ENCODE measurements at regions of chr3 and their contacts with region 1.

Region 1: DNA sequence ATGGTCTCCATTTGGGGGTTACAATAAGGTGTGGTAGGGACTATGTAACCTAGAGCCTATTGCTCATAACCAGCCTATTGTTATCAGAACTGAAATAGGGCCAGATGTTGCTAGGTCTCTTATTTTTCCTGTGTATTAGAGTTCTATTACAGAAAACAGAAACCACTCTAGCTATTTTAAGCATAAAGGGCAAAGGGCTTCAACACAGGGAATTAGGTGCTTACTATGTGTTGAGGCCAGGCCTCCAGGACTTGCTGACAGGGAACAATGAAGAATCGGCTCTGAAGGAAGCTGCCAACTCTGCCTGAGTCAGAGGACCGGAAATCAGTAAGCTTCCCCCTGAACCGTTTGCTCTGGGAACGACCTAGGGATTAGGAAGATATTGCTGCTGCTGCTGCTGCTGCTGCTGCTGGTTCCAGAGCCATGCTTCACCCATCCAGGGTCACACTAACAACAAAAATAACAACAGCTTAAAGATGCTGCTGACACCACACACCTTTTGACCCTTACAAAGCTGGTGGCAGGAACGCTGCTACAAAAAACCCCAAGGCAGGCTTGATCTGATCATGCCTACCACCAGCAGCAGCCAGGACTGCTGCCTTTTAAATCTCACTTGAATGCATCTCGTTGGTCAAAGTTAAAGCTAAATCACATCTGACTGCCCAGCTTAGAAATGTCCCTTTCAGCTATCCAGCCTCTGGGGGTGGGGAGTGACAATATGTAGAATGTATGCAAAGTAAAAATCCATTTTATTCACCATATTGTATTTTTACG is 276.9 kb upstream of the IL12A start:
- DNase-seq: peak in 4 of 5 donors; percentile 52 to 76 (median 60)
- ATAC-seq: peak; percentile 88 to 99 (median 98)
- H3K4me3 ChIP-seq: no peak overlapping the region
- H3K27ac ChIP-seq: peak overlapping the region; percentile 18 to 72 (median 52)
- H3K4me1 ChIP-seq: peaks cover 0 to 14% (median 7%) of the 10 kb centered on the region in 12 donors
- H3K27me3 ChIP-seq: no peaks in the 10 kb centered on the region
- CTCF ChIP-seq: no peak
- POLR2A ChIP-seq: no peak

Region 2: GRCh38 chr3:159672728-159673688 is 38.7 kb before region 1 on chr3:
- intact Hi-C with region 1: loop called in 1 of 10 experiments (anchors 5 kb)
- DNase-seq: no peak
- ATAC-seq: no peak
- H3K4me3 ChIP-seq: no peak overlapping the region
- H3K27ac ChIP-seq: no peak overlapping the region
- H3K4me1 ChIP-seq: peaks cover 0 to 20% (median 7%) of the 10 kb centered on the region in 12 donors
- H3K27me3 ChIP-seq: no peaks in the 10 kb centered on the region
- CTCF ChIP-seq: peak in 2 of 12 donors; percentile 14 to 16
- POLR2A ChIP-seq: no peak

Region 3: GRCh38 chr3:159732172-159733111 is 20.7 kb after region 1 on chr3:
- intact Hi-C with region 1: no loop called
- DNase-seq: peak in 3 of 5 donors; percentile 22 to 34 (median 28)
- ATAC-seq: peak; percentile 74 to 87 (median 82)
- H3K4me3 ChIP-seq: peak overlapping the region in 10 of 12 donors; percentile 14 to 54 (median 38)
- H3K27ac ChIP-seq: peak overlapping the region in 11 of 12 donors; percentile 23 to 75 (median 47)
- H3K4me1 ChIP-seq: peaks cover 0 to 25% (median 7%) of the 10 kb centered on the region in 12 donors
- H3K27me3 ChIP-seq: no peaks in the 10 kb centered on the region
- CTCF ChIP-seq: peak in 3 of 12 donors; percentile 8 to 37 (median 23)
- POLR2A ChIP-seq: no peak

Region 4: DNA sequence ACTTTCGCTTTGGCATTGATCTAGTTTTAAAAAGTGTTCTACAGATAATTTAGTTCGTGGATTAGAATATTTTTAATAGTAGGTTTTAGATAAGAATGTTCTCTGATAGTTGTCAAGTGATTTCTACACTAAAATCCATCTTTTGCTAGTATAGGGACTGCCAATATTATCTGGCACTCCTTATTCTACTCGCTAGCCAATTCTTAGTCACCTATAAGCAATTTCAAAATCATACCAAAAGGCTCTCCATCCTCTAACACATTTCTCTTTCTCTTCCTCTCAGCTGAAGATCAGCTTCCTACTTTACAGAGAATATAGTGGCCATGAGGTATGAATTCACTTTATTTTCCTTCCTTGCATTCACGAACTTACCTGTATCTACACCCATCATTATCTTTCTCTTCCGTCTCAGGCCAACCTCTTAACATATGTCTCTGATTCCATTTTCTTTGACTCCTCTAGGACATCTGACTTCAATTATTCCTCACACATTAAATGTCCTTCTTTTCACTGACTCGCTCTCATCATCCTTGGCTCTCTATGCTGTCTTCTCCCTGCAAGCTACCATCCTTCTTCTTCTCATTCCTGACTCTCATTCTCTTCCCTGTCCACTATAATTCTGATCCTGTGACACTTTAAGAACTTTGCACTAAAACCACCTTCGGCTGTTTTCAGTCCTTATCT is 549.0 kb after region 1 on chr3:
- intact Hi-C with region 1: no loop called
- DNase-seq: no peak
- ATAC-seq: no peak
- H3K4me3 ChIP-seq: peak overlapping the region in 5 of 12 donors; percentile 24 to 39 (median 26)
- H3K27ac ChIP-seq: peak overlapping the region in 1 of 12 donors; percentile 11
- H3K4me1 ChIP-seq: peaks cover 0 to 4% (median 0%) of the 10 kb centered on the region in 12 donors
- H3K27me3 ChIP-seq: no peaks in the 10 kb centered on the region
- CTCF ChIP-seq: no peak
- POLR2A ChIP-seq: no peak